ENCODE measurements at regions of chr5 and their contacts with region 1.

Region 1: GRCh38 chr5:134738963-134739661 is 764 bp downstream of the CAMLG start:
- DNase-seq: no peak
- H3K4me3 ChIP-seq: peak overlapping the region; percentile 87
- H3K27ac ChIP-seq: peak overlapping the region; percentile 94
- H3K27me3 ChIP-seq: no peaks in the 10 kb centered on the region
- CTCF ChIP-seq: no peak; the same call in 1 of the 2 replicates

Region 2: DNA sequence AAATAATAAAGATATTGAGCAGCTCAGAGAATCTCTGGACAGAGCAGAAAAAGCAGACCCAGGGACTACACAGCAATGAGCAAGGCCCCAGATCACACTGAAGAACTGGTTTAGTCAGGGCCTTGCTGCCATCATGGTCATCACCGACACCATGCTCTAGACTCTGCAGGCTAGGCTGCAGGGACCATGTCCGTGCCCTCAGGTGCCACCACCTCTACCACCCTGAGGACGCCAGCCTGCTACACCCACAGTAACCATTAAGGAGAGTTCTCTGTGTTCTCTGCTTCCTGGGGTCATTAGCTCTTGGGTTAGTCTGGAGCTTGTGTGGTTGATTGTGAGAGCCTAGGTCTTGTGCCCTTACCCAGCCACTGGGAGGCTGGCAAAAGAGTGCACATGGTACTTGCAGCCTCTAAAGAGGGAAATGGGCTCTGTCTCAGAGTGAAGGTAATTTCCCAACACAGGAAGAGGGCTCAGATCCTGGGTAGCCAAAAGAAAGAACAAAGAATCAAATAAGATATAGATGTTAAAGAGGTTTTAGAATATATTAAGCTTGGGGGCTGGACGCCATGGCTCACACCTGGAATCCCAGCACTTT is 245.6 kb before region 1 on chr5:
- CTCF ChIA-PET with region 1: no interaction called
- POLR2A ChIA-PET with region 1: no interaction called
- DNase-seq: no peak
- H3K4me3 ChIP-seq: no peak overlapping the region
- H3K27ac ChIP-seq: no peak overlapping the region
- H3K27me3 ChIP-seq: no peaks in the 10 kb centered on the region
- CTCF ChIP-seq: no peak

Region 3: GRCh38 chr5:134758504-134759341 is 19.6 kb after region 1 on chr5 and contains the start of gene DDX46:
- CTCF ChIA-PET with region 1: interaction called, 10 read pairs
- POLR2A ChIA-PET with region 1: interaction called, 9 read pairs
- DNase-seq: peak; percentile 70
- H3K4me3 ChIP-seq: peak within 1 kb of the TSS; percentile 97
- H3K27ac ChIP-seq: peak within 1 kb of the TSS; percentile 71
- H3K27me3 ChIP-seq: no peaks in the 10 kb centered on the region
- CTCF ChIP-seq: peak; percentile 75
- polyA plus RNA-seq, gene DDX46: 36.6 and 45.4 TPM in 2 replicates

Region 4: DNA sequence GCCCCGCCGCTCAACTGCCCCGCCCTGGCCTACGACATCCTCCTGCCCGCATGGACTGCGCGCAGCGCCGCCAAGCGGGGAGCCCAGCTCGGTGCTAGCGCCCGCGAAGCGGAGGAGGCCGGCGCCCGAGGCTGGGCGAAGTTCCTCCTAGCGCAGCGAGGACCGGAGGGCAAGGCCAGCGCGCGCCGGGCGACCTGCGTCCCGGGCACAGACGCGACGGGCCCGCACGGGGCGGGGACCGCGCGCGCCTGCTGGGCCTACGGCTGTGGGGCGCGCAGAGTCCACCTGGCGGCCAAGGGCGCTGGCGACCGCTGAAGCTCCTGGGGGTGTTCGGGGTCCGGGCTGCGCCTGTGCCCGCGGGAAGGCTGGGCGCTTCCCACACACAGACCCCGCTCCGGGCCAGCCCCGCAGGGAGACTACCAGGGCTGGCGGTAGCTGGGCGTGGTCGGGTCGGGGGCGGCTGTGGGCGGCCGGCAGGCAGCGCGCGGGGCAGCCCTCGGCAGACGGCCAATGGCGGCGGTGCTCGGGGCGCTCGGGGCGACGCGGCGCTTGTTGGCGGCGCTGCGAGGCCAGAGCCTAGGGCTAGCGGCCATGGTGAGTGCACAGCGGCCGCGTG is 165.6 kb after region 1 on chr5 and contains the start of gene PCBD2:
- CTCF ChIA-PET with region 1: interaction called, 13 read pairs
- POLR2A ChIA-PET with region 1: interaction called, 7 read pairs
- DNase-seq: peak; percentile 67
- H3K4me3 ChIP-seq: peak within 1 kb of the TSS; percentile 76
- H3K27ac ChIP-seq: peak within 1 kb of the TSS; percentile 82
- H3K27me3 ChIP-seq: no peaks in the 10 kb centered on the region
- CTCF ChIP-seq: peak; percentile 76
- polyA plus RNA-seq, gene PCBD2: 4.5 and 4.8 TPM in 2 replicates

Region 5: GRCh38 chr5:134917070-134917815 is 178.1 kb after region 1 on chr5:
- CTCF ChIA-PET with region 1: no interaction called
- POLR2A ChIA-PET with region 1: no interaction called
- DNase-seq: no peak
- H3K4me3 ChIP-seq: no peak overlapping the region
- H3K27ac ChIP-seq: no peak overlapping the region
- H3K27me3 ChIP-seq: no peaks in the 10 kb centered on the region
- CTCF ChIP-seq: peak; percentile 13; the same call in 1 of the 2 replicates

Measured in AG04450 (cell line).